ENCODE measurements at regions of chr19 and their contacts with region 1.

Region 1: DNA sequence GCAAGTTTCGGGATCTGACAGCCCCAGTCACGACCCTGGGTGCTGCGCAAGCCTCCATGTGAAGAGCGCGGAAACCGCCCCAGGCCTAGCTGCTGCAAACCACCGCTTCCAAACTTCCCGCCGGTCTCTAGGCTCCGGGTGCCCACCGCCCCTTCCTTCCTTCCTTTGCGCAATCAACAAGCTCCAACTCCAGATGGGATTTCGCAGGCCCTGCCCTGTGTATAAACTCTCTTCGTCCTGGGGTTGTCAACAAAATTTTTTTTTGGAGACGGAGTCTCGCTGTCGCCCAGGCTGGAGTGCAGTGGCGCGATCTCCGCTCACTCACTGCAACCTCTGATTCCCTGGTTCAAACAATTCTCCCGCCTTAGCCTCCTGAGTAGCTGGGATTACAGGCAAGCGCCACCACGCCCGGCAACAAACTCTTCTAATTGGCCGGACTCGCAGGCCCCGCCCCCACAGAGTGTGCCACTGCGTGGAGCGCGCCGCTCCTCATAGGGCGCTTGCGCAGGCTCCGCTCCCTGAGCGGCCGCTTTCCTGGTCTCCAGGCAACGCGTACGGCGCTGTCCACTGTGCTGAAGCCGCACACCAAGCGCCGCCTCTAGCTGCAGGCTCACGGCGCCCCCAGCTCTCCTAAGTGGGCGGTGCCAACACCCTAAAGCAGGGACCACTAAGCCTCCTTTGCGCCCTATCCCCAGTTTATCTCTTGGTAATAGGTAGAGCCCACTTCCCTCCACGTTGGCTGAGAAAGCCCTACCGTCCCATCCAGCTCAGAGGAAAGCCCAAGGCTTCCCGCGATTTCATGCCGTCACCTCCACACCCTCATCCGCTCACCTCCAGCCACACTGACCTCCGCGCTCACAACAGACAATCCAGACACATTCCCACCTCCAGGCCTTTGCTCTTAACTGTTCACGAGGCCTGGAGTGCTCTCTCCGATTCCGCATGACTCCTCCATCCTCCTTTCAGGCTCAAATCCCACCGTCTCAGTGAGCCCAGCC is 5.5 kb upstream of the QTRT1 start:
- DNase-seq: peak; percentile 95
- H3K4me3 ChIP-seq: peak overlapping the region; percentile 22 to 63
- H3K27ac ChIP-seq: no peak overlapping the region
- H3K4me1 ChIP-seq: peaks cover 0 to 10% of the 10 kb centered on the region in 2 experiments; a peak in 1 of 4 replicates
- H3K27me3 ChIP-seq: no peaks in the 10 kb centered on the region
- CTCF ChIP-seq: no peak
- EP300 ChIP-seq: no peak
- RAD21 ChIP-seq: no peak

Region 2: GRCh38 chr19:10384580-10384979 is 311.1 kb before region 1 on chr19:
- CTCF ChIA-PET with region 1: no interaction called
- POLR2A ChIA-PET with region 1: no interaction called
- DNase-seq: no peak
- H3K4me3 ChIP-seq: no peak overlapping the region
- H3K27ac ChIP-seq: no peak overlapping the region
- H3K4me1 ChIP-seq: peaks cover 0 to 7% of the 10 kb centered on the region in 2 experiments; a peak in 1 of 4 replicates
- H3K27me3 ChIP-seq: no peaks in the 10 kb centered on the region
- CTCF ChIP-seq: no peak
- EP300 ChIP-seq: no peak
- RAD21 ChIP-seq: no peak

Region 3: DNA sequence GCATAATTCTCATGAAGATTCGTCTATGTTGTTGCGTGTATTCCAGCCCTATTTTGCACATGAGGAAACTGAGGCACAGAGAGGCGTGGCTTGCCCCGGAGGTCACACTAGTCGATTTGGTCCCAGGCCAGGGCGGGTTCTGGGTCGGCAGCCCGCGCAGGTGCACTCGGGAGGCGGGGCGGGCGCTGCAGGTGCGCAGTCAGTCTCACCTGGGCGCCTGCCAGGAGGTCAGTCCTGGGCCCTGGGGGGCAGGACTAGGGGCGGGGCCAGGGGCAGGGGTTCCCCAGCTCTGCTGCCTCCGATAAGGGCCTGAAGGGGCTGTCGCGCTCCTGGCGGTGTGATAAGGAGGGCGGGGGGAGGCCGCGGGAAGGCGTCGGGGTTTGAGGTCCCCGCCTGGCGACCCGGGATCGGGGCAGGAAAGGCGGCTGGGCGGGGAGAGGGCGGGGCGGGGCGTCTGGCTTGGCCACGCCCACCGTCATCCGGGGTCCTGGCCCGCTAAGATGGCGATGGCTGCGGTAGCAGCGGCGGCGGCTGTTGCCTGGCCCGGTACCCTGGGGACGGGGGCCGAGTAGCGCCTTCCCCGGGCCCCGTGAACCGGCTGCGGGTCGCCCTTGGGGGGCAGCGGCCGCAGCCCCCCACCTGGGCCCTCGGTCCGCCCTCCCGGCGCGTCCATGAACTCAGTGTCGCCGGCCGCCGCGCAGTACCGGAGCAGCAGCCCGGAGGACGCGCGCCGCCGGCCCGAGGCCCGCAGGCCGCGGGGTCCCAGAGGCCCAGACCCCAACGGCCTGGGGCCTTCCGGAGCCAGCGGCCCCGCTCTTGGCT is 152.1 kb before region 1 on chr19 and contains the start of gene ATG4D:
- CTCF ChIA-PET with region 1: interaction called, 13 read pairs
- POLR2A ChIA-PET with region 1: no interaction called
- DNase-seq: peak; percentile 100
- H3K4me3 ChIP-seq: peak within 1 kb of the TSS; percentile 67 to 81
- H3K27ac ChIP-seq: peak within 1 kb of the TSS in 1 of 2 experiments; percentile 53; a peak in 1 of 4 replicates
- H3K4me1 ChIP-seq: peaks cover 0 to 7% of the 10 kb centered on the region in 2 experiments; a peak in 1 of 4 replicates
- H3K27me3 ChIP-seq: peaks cover 14% of the 10 kb centered on the region; the same call in 1 of the 2 replicates
- CTCF ChIP-seq: no peak
- EP300 ChIP-seq: no peak
- RAD21 ChIP-seq: no peak
- polyA plus RNA-seq, gene ATG4D: 19.7 and 22.6 TPM in 2 replicates

Region 4: DNA sequence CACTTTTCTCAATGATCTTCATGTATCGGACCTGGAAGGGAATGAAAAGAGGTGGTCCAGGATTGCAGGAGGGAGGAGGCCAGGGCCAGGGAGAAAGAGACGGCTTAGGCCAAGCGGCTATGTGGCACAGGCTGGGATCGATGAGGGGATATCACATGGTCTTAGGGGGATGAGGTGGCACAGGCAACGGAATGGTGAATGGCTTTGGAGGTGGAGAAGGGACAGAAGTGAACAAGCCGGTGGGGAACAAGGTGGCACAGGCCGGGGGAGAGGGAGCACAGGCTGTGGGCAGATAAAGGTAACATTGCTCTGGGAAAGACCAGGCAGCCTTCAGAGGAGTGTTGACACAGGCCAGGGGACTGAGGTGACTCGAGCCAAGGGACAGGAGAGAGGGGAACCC is 121.2 kb before region 1 on chr19:
- CTCF ChIA-PET with region 1: interaction called, 163 read pairs
- POLR2A ChIA-PET with region 1: no interaction called
- DNase-seq: no peak
- H3K4me3 ChIP-seq: no peak overlapping the region
- H3K27ac ChIP-seq: no peak overlapping the region
- H3K4me1 ChIP-seq: peaks cover 0 to 6% of the 10 kb centered on the region in 2 experiments; a peak in 1 of 4 replicates
- H3K27me3 ChIP-seq: no peaks in the 10 kb centered on the region
- CTCF ChIP-seq: no peak
- EP300 ChIP-seq: no peak
- RAD21 ChIP-seq: no peak

Region 5: DNA sequence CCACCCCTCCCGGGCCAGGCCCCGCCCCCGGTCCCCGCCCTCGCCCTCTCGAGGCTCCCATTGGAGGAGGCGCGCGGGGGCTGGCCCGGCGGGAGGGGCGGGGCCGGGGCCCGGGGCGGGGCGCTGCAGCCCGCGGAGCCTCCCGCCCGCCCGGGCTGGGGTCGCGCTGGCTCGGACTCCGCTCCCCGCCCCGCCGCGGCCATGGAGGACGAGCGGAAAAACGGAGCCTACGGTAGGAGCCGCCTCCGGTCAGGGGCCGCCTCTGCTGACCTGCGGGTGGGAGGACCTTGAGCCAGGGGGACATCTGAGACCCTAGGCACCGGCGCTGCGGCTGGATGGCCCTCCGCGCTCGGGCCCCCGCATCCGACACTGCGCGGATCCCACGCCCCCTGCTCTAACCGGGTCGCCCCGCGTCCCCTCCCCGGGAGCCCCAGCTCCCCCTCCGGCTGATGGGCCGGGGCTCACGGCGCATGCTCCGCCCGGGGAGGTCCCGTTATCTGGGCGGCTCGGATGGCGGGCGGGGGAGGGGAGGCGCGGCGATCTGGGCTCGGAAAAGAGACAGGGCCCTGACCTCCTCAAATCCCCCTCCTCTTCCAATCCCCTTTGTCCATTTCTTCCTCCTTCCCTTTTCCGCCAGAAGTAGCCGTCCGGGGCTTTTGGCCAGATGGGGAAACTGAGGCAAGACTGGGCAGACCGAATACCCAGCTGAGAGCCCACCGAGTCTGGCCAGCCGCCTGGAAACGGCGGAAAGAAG is 93.2 kb before region 1 on chr19:
- CTCF ChIA-PET with region 1: interaction called, 18 read pairs
- POLR2A ChIA-PET with region 1: no interaction called
- DNase-seq: peak; percentile 100
- H3K4me3 ChIP-seq: peak overlapping the region; percentile 69 to 95
- H3K27ac ChIP-seq: peak overlapping the region; percentile 54 to 83; a peak in 3 of 4 replicates
- H3K4me1 ChIP-seq: peaks cover 0 to 8% of the 10 kb centered on the region in 2 experiments; a peak in 1 of 4 replicates
- H3K27me3 ChIP-seq: peaks cover 15% of the 10 kb centered on the region; the same call in 1 of the 2 replicates
- CTCF ChIP-seq: no peak
- EP300 ChIP-seq: no peak
- RAD21 ChIP-seq: no peak

Region 6: GRCh38 chr19:10670182-10670581 is 25.5 kb before region 1 on chr19:
- CTCF ChIA-PET with region 1: interaction called, 14 read pairs
- POLR2A ChIA-PET with region 1: interaction called, 3 read pairs
- DNase-seq: no peak
- H3K4me3 ChIP-seq: no peak overlapping the region
- H3K27ac ChIP-seq: no peak overlapping the region
- H3K4me1 ChIP-seq: no peaks in the 10 kb centered on the region
- H3K27me3 ChIP-seq: no peaks in the 10 kb centered on the region
- CTCF ChIP-seq: no peak
- EP300 ChIP-seq: no peak
- RAD21 ChIP-seq: no peak

Region 7: GRCh38 chr19:10826846-10827245 is 131.1 kb after region 1 on chr19:
- CTCF ChIA-PET with region 1: no interaction called
- POLR2A ChIA-PET with region 1: no interaction called
- DNase-seq: no peak
- H3K4me3 ChIP-seq: no peak overlapping the region
- H3K27ac ChIP-seq: no peak overlapping the region
- H3K4me1 ChIP-seq: no peaks in the 10 kb centered on the region
- H3K27me3 ChIP-seq: no peaks in the 10 kb centered on the region
- CTCF ChIP-seq: no peak
- EP300 ChIP-seq: no peak
- RAD21 ChIP-seq: no peak